ENCODE measurements at regions of chr9 and their contacts with region 1.

Region 1: DNA sequence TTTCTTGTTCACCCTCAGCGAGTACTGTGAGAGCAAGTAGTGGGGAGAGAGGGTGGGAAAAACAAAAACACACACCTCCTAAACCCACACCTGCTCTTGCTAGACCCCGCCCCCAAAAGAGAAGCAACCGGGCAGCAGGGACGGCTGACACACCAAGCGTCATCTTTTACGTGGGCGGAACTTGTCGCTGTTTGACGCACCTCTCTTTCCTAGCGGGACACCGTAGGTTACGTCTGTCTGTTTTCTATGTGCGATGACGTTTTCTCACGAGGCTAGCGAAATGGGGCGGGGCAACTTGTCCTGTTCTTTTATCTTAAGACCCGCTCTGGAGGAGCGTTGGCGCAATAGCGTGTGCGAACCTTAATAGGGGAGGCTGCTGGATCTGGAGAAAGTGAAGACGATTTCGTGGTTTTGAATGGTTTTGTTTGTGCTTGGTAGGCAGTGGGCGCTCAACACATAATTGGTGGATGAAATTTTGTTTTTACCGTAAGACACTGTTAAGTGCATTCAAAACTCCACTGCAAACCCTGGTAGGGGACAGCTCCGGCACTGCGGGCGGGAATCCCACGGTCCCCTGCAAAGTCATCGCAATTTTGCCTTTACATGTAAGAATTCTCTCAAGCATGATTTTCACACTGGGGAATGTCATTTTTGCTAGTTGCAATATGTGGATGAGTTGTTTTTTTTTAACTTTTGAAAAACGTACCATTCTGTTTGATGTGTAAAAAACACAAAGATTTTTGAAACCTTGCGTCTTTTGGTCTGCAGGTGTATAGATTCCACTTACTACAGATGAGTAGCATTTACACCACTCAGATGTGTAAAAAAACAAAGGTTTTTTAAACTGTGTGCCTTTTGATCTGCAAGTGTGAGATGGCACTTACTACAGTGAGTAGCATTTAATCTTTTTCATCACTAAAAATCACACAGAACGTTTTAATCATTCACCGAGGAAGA is 631 bp upstream of the C9orf72 start:
- DNase-seq: peak; percentile 96 to 97
- ATAC-seq: peak; percentile 95
- H3K4me3 ChIP-seq: peak overlapping the region; percentile 76 to 91
- H3K27ac ChIP-seq: peak overlapping the region in 1 of 2 donors; percentile 78
- H3K4me1 ChIP-seq: no peaks in the 10 kb centered on the region
- H3K27me3 ChIP-seq: no peaks in the 10 kb centered on the region

Region 2: DNA sequence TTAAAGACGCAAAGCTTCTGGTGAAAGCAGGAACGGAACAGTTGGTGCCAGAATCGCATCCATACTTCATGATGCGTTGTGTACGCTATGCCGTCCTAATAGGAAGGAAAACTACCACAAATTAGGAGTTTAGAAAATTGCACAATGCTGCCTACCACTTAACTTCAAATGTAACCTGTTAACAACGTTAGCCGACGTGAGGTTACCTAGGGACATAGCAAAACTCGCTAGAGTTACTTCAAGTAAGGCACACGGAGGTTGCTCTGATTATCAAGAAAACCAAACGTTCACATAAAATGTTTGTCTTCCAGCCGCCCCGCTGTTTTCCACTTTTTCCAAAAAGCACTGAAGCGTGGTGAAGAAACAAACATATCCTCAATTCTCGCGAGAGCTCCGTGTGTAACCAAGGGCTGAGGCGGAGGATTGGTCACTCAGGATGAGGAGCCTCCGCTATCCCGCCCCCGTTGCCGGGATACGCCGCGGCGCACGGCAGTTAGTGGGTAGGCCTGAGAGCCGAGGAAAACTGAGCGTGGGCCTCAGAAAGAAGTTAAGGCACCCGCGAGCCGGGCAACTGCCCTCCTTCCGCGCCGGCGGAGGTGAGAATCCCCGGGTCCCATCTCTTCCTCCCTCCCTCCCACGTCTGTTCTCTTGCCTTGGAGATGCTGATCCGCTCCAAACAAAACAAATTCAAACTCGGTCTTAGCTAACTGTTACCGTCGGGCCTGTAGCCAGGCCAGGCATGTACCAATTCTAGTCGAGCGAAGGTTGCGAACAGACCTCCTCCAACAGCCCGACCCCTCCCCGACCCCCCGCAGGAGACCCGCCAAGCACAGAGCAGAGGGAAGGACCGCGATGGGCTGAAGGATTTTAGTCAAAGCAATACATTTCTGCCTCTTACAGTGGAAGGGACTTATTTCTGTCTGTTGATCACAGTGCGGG is 617.7 kb before region 1 on chr9 and contains the start of gene IFT74:
- intact Hi-C with region 1: loop called in 1 of 2 experiments (anchors 10 kb)
- DNase-seq: peak; percentile 99
- ATAC-seq: peak; percentile 100
- H3K4me3 ChIP-seq: peak within 1 kb of the TSS; percentile 57 to 90
- H3K27ac ChIP-seq: peak within 1 kb of the TSS; percentile 69 to 82
- H3K4me1 ChIP-seq: no peaks in the 10 kb centered on the region
- H3K27me3 ChIP-seq: no peaks in the 10 kb centered on the region
- total RNA-seq, gene IFT74: 7.5 to 13.2 TPM